ENCODE measurements at regions of chr4 and their contacts with region 1.

Region 1: DNA sequence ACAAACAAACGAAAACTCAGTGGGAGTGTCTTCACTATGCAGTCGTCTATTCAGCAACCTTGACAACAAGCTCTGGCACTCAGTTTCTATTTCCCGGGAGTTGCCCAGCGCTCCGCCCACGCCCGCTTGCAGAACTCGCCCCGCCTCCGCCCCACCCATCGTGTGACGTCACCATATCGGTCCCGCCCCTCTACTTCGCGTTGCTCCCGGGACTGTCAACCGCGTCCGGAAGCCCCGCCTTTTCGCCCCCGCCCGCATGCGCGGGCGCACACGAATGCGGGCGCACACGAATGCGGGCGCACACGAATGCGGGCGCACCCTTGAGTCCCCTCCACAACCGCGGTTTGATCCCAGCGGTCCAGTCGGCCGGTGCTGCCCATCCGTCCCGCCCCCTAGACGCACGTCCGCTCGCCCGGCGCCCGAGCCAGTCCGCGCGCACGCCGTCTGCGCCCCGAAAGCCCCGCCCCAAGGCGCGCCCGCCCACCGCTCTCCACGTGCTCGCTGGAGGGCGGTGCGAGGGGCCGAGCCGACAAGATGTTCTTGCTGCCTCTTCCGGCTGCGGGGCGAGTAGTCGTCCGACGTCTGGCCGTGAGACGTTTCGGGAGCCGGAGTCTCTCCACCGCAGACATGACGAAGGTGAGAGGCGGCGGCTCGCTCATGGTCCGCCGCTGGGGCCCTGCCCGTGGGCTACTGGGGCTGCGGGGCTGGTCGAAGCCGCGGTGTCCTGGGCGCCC is at the start of gene LAP3:
- DNase-seq: peak; percentile 97
- H3K4me3 ChIP-seq: peak within 1 kb of the TSS; percentile 61 to 96 (median 90)
- H3K27ac ChIP-seq: peak within 1 kb of the TSS; percentile 82
- H3K4me1 ChIP-seq: peaks cover 36% of the 10 kb centered on the region
- H3K27me3 ChIP-seq: no peaks in the 10 kb centered on the region
- CTCF ChIP-seq: no peak
- POLR2A ChIP-seq: peak; percentile 94
- total RNA-seq, gene LAP3: 73.7 and 94.8 TPM in 2 replicates

Region 2: DNA sequence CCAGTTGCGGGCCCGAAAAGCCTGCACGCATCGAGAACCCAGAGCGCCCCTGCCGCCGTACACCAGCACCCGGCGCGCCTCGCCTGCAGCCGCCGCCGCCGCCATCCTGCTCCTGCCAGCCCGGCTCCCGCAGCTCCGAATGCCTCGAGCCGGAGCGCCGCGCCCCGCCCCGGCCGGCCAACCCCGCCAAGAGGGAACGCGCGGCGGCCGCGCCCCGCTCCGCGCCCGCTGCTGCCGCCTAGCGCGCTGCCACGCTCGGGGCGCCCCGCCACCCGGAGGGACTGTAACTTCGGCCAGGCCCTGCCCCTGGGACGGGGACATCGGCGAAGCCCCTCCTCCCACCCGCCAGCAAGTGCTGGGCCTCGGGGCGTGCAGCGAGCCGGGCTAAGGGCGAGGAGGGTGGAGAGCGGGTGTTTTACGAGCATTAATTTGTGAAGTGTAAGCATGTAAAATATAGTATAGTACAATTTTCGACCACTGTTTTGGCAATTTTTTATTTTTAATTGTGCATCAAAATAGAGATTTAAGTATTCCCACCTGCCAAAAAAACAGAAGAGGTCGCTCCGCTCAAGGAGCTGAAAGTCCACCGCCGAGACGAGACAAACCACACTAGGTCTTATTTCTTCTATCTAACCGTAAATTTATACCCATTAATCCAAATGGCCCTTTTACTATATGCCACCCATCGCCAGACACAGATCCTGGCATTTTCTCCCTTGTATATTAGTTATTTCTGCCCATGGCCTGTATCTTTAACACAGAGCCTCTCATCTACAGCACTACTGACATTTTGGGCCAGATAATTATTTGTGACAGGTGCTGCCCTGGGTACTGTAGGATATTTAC is 64.9 kb before region 1 on chr4 and contains the start of gene QDPR:
- CTCF ChIA-PET with region 1: no interaction called
- POLR2A ChIA-PET with region 1: no interaction called
- dilution Hi-C with region 1: no loop called
- intact Hi-C with region 1: loop called (anchors 1 kb)
- DNase-seq: peak; percentile 77
- H3K4me3 ChIP-seq: peak within 1 kb of the TSS; percentile 58 to 97 (median 74)
- H3K27ac ChIP-seq: peak within 1 kb of the TSS; percentile 56
- H3K4me1 ChIP-seq: peaks cover 15% of the 10 kb centered on the region
- H3K27me3 ChIP-seq: peaks cover 14% of the 10 kb centered on the region in 2 experiments
- CTCF ChIP-seq: peak in 1 of 2 donors; percentile 45
- POLR2A ChIP-seq: peak; percentile 67
- total RNA-seq, gene QDPR: 20.9 and 24.6 TPM in 2 replicates

Region 3: GRCh38 chr4:17544205-17544604 is 32.9 kb before region 1 on chr4:
- CTCF ChIA-PET with region 1: interaction called, 10 read pairs
- POLR2A ChIA-PET with region 1: interaction called, 4 read pairs
- dilution Hi-C with region 1: no loop called
- intact Hi-C with region 1: loop called (anchors 1 kb)
- DNase-seq: no peak
- H3K4me3 ChIP-seq: no peak overlapping the region
- H3K27ac ChIP-seq: no peak overlapping the region
- H3K4me1 ChIP-seq: peaks cover 4% of the 10 kb centered on the region
- H3K27me3 ChIP-seq: peaks cover 2 to 3% of the 10 kb centered on the region in 2 experiments
- CTCF ChIP-seq: no peak
- POLR2A ChIP-seq: no peak

Region 4: GRCh38 chr4:17597517-17597916 is 20.4 kb after region 1 on chr4:
- CTCF ChIA-PET with region 1: interaction called, 5 read pairs
- POLR2A ChIA-PET with region 1: no interaction called
- dilution Hi-C with region 1: no loop called
- intact Hi-C with region 1: loop called (anchors 2 kb)
- DNase-seq: peak; percentile 48
- H3K4me3 ChIP-seq: no peak overlapping the region
- H3K27ac ChIP-seq: no peak overlapping the region
- H3K4me1 ChIP-seq: no peaks in the 10 kb centered on the region
- H3K27me3 ChIP-seq: no peaks in the 10 kb centered on the region
- CTCF ChIP-seq: peak; percentile 32 to 38
- POLR2A ChIP-seq: no peak

Region 5: DNA sequence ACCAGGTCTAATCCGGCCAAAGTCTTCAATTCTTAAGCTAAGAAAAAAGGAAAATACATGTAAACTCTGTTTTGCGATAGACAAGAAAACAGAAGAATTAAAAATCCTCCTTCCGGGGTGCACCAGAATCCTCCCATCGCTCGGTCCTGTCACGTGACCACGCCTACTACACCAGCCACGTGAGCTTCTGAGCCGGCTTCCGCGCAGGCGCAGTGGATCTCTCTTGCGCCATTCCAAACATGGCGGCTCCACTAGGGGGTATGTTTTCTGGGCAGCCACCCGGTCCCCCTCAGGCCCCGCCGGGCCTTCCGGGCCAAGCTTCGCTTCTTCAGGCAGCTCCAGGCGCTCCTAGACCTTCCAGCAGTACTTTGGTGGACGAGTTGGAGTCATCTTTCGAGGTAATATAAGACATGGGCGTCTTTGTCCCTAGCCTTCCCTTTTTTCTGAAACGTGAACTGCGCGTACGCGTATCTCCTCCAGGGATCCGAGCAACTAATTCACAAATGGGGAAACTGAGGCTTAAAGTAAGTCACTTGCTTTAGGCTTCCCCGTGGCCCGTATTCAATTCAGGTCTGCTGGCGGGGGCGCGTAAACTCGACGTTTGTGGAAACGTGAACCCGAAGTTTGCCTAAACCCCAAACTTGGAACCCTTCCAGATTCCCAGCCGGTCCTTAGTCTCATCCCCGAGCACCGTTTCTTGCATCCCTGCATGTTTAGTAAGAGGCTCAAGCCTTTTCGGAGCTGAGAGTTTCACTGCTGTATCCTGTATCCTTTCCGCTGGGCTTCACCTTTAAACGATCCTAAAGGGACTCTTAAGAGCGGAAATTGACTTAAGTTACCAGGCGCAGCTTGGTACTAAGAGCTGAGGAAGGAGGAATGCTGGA is 37.6 kb after region 1 on chr4 and contains the start of gene MED28:
- CTCF ChIA-PET with region 1: interaction called, 4 read pairs
- POLR2A ChIA-PET with region 1: no interaction called
- dilution Hi-C with region 1: no loop called
- intact Hi-C with region 1: loop called (anchors 1 kb)
- DNase-seq: peak; percentile 91
- H3K4me3 ChIP-seq: peak within 1 kb of the TSS; percentile 72 to 100 (median 92)
- H3K27ac ChIP-seq: peak within 1 kb of the TSS; percentile 82
- H3K4me1 ChIP-seq: peaks cover 17% of the 10 kb centered on the region
- H3K27me3 ChIP-seq: no peaks in the 10 kb centered on the region
- CTCF ChIP-seq: peak in 1 of 2 donors; percentile 13
- POLR2A ChIP-seq: peak; percentile 90
- total RNA-seq, gene MED28: 41.2 and 49.1 TPM in 2 replicates

Region 6: GRCh38 chr4:17771284-17771908 is 194.3 kb after region 1 on chr4:
- CTCF ChIA-PET with region 1: no interaction called
- POLR2A ChIA-PET with region 1: no interaction called
- dilution Hi-C with region 1: no loop called
- intact Hi-C with region 1: no loop called
- DNase-seq: no peak
- H3K4me3 ChIP-seq: no peak overlapping the region
- H3K27ac ChIP-seq: no peak overlapping the region
- H3K4me1 ChIP-seq: no peaks in the 10 kb centered on the region
- H3K27me3 ChIP-seq: no peaks in the 10 kb centered on the region
- CTCF ChIP-seq: no peak
- POLR2A ChIP-seq: no peak

Region 7: DNA sequence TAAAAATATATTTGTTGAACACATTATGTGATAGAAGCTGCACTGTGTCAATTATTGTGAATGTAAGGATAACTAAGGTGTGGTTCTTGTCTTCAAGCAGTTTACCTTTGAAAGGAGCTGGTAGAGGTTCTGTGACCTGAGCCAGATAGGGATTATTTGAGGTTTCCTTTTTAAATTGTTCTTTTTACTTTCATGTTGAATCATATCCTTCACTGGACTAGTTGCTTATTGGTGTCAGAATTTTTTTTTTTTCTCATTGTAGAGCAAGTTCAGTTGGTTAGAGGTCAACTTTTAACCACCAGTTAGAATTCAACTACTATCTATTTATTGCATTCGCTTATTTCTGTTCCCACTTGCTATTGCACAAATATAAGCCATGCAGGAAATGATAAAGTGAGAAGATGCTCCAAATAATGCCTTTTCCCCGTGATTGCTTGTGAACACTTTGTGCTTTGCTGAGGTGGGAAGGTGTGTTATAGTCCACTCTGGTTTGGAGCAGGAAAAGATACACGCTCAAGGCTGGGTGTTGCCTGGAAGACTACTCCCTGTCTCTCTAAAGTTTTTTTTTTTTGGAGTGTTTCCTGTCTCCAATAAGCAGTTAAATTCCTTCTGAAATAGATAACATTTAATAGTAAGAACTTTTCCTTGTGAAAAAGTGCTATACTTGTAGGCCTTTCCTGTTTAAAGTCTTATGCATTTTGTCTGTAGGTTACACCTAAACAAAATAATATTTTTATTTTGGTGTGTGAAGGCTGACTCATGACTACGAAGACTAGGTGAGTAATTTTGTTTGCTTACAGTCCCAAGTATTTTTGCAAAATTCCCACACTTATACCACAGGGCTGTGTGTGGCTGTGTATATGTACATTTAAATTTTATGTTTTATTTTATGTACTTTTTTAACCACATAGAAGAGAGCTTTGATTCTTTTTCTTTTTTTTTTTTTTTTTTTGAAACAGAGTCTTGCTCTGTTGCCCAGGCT is 528.2 kb after region 1 on chr4:
- CTCF ChIA-PET with region 1: no interaction called
- POLR2A ChIA-PET with region 1: no interaction called
- dilution Hi-C with region 1: no loop called
- intact Hi-C with region 1: loop called (anchors 1 kb)
- DNase-seq: peak; percentile 57
- H3K4me3 ChIP-seq: no peak overlapping the region
- H3K27ac ChIP-seq: peak overlapping the region; percentile 46
- H3K4me1 ChIP-seq: peaks cover 36% of the 10 kb centered on the region
- H3K27me3 ChIP-seq: no peaks in the 10 kb centered on the region
- CTCF ChIP-seq: no peak
- POLR2A ChIP-seq: no peak

Measured in endothelial cell of umbilical vein (primary cell).